ENCODE measurements at regions of chr17 and their contacts with region 1.

Region 1: GRCh38 chr17:41548844-41549595 is 20.9 kb upstream of the KRT19 start:
- DNase-seq: peak; percentile 90 to 95 (median 93)
- ATAC-seq: peak; percentile 80
- H3K4me3 ChIP-seq: no peak overlapping the region
- H3K4me1 ChIP-seq: peaks cover 31% of the 10 kb centered on the region
- CTCF ChIP-seq: peak; percentile 55

Region 2: GRCh38 chr17:40909351-40909750 is 639.7 kb before region 1 on chr17:
- intact Hi-C with region 1: loop called (anchors 10 kb)
- DNase-seq: peak; percentile 68 to 83 (median 78)
- ATAC-seq: peak; percentile 92
- H3K4me3 ChIP-seq: no peak overlapping the region
- H3K4me1 ChIP-seq: peaks cover 7% of the 10 kb centered on the region
- CTCF ChIP-seq: peak; percentile 41

Region 3: GRCh38 chr17:41635121-41636097 is 86.4 kb after region 1 on chr17:
- intact Hi-C with region 1: loop called (anchors 10 kb)
- DNase-seq: peak in 1 of 3 donors; percentile 4
- ATAC-seq: peak; percentile 28
- H3K4me3 ChIP-seq: no peak overlapping the region
- H3K4me1 ChIP-seq: no peaks in the 10 kb centered on the region
- CTCF ChIP-seq: no peak

Region 4: GRCh38 chr17:41648411-41649195 is 99.6 kb after region 1 on chr17:
- intact Hi-C with region 1: loop called in 1 of 2 experiments (anchors 10 kb)
- DNase-seq: peak; percentile 89 to 94 (median 92)
- ATAC-seq: peak; percentile 76
- H3K4me3 ChIP-seq: no peak overlapping the region
- H3K4me1 ChIP-seq: peaks cover 46% of the 10 kb centered on the region
- CTCF ChIP-seq: peak; percentile 80

Region 5: DNA sequence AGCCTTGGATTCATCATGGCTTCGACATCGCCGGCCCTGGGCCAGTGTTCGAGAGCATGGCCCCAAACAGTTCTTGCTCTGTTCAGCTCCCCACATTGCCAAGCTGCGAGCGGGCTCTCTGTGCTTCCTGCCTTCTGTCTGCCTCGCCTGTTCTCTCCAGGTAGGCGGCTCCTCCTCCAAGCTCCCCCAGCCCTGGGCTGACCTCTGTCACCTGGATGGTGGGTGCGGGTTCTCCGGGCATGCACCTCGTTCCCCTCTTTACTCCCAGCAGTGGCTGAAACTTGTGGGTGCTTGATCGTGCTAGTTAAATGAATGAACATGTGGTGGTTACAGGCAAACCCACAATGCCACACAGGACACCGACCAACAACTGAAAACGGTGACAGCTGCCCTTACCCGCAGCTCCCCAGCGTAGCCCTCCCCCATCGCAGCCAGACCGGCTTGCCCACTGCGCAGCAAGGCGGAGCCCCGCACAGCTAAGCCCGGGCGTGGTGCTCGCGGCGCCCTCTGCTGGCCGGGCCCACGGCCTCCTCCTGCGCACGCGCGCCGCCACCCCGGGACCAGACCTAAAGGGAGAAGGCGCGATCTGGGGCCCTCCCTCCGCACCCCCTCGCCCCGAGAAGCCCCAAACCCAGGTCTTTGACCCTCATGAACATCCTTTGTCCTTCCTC is 116.7 kb after region 1 on chr17:
- intact Hi-C with region 1: loop called (anchors 5 to 10 kb)
- DNase-seq: peak; percentile 93 to 96 (median 94)
- ATAC-seq: peak; percentile 91
- H3K4me3 ChIP-seq: no peak overlapping the region
- H3K4me1 ChIP-seq: peaks cover 22% of the 10 kb centered on the region
- CTCF ChIP-seq: peak; percentile 95

Measured in mucosa of descending colon (tissue), 3 donors.